Colonic mucosa (tissue), 4 donors: ENCODE measurements at regions of chr14 and their contacts with region 1.

Region 1: GRCh38 chr14:81170104-81170828 is 50.5 kb downstream of the GTF2A1 start:
- DNase-seq: peak; percentile 94
- H3K4me3 ChIP-seq: peak overlapping the region; percentile 64
- H3K27ac ChIP-seq: peak overlapping the region; percentile 97
- H3K4me1 ChIP-seq: no peaks in the 10 kb centered on the region
- H3K27me3 ChIP-seq: no peaks in the 10 kb centered on the region
- CTCF ChIP-seq: peak; percentile 88

Region 2: DNA sequence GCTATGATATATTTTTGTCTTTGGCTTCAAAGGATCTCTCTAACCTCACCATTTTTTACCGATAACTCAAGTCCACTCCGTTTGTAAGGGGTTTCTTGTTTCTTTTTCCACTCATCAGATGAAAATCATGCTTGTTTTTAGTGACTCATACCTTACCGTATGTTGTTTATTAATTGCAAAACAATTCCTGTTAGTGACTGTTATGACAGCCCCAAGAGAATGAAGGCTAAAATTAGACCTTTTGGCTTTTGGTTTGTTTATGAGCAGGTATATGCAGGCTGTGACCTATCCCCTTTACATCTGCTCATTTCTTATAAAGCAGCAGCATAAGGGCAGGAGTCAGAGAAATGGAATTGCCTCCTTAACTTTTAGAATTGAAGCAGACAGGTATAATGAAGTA is 548.6 kb before region 1 on chr14:
- intact Hi-C with region 1: no loop called
- DNase-seq: no peak
- H3K4me3 ChIP-seq: no peak overlapping the region
- H3K27ac ChIP-seq: no peak overlapping the region
- H3K4me1 ChIP-seq: no peaks in the 10 kb centered on the region
- H3K27me3 ChIP-seq: no peaks in the 10 kb centered on the region
- CTCF ChIP-seq: no peak

Region 3: DNA sequence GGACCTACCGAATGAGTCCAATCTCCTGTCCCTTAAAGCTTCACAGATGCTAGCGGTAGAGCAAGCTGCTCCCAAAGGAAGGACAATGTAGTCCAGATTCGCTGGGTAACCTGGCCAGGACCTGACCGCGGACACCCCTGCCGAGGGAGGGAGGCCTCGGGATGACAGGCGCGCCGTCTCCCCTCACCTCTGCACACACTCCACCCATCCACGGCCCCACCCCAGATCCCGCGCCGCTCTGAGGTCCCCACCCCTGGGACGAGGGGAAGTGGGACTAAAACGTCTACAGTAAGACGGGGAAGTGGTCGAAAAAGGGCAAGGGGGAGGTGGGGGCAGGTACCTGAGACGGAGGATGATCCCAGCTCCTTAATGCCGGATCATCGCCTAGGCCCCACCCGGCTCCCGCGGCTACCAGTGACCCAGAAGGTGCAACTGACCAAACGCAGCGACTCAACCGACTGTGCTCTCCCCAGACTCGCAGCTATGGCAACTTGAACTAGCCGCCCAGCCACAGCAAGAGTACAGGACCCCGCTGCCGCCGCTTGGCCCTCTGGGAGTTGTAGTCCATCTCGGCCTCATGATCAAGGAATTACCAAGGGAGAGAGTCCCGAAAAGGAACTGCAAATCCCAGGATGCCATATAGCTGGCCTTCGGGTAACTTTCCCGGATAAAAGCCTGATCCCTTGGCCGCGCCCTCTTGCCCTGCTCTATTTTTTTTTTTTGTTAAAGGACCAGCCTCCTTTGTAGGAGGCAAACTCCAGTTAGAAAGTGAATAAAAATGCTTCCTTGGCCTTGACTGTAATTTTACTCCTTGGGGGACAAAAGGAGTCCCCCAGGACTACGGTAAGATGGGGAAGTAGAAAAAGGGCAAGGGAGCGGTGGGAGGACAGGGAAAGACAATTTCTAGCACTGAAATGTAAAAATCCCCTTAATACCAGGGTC is 228.8 kb before region 1 on chr14 and contains the start of gene CEP128:
- intact Hi-C with region 1: loop called (anchors 5 kb)
- DNase-seq: peak; percentile 96
- H3K4me3 ChIP-seq: peak within 1 kb of the TSS; percentile 68
- H3K27ac ChIP-seq: no peak within 1 kb of the TSS
- H3K4me1 ChIP-seq: peaks cover 4% of the 10 kb centered on the region
- H3K27me3 ChIP-seq: no peaks in the 10 kb centered on the region
- CTCF ChIP-seq: no peak
- total RNA-seq, gene CEP128: 4.4 to 11.6 TPM

Region 4: GRCh38 chr14:80996049-80996901 is 174.0 kb before region 1 on chr14:
- intact Hi-C with region 1: loop called (anchors 5 kb)
- DNase-seq: peak; percentile 24
- H3K4me3 ChIP-seq: no peak overlapping the region
- H3K27ac ChIP-seq: no peak overlapping the region
- H3K4me1 ChIP-seq: no peaks in the 10 kb centered on the region
- H3K27me3 ChIP-seq: no peaks in the 10 kb centered on the region
- CTCF ChIP-seq: peak; percentile 29

Region 5: DNA sequence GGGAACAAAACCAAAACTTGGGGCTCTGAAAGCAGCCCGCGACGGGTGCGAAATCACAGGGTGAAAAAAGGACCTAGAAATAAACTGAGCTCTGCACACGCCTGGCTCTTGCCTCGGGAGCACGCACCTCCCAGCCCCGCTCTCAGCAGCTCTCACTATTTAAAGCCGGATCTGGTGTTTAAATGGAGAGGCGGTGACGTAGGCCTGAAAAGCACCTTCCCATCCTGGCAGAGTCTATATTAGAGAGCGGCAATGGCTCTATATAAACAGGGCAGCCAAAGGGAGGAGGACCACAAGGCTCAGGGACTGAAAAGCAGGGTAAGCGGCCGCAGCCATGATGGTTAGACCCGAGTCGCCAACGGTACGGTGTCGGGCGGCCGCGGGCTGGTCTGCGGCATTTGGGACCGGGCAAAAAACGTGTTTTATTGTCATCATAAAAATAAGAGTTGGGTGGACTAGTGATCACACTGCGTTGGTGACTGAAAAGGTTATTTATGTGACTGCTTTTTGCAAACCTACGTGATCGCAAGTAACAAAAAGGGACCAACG is 49.0 kb after region 1 on chr14:
- intact Hi-C with region 1: loop called (anchors 5 kb)
- DNase-seq: peak; percentile 95
- H3K4me3 ChIP-seq: peak overlapping the region; percentile 63
- H3K27ac ChIP-seq: peak overlapping the region; percentile 99
- H3K4me1 ChIP-seq: no peaks in the 10 kb centered on the region
- H3K27me3 ChIP-seq: no peaks in the 10 kb centered on the region
- CTCF ChIP-seq: no peak

Region 6: DNA sequence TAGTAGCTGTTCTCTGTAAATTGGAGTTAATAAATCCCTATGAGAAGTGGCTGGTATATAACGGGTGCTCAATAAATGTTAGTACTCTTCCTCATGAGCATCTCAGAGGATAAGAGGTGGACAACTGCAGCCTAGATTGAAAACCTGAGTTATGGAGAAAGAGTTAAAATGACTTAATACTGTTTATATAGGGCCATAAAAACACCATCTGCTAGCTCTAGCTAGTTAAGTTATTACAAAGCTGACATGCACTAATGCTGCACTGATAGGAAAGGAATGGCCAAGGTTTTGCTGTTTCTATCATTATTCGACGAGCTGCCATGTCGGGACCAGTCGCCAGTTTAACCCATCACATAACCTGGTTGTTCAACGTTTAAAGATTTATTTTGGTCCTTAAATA is 435.4 kb after region 1 on chr14:
- intact Hi-C with region 1: no loop called
- DNase-seq: no peak
- H3K4me3 ChIP-seq: no peak overlapping the region
- H3K27ac ChIP-seq: no peak overlapping the region
- H3K4me1 ChIP-seq: no peaks in the 10 kb centered on the region
- H3K27me3 ChIP-seq: no peaks in the 10 kb centered on the region
- CTCF ChIP-seq: no peak